ENCODE measurements at regions of chr4 and their contacts with region 1.

Region 1: DNA sequence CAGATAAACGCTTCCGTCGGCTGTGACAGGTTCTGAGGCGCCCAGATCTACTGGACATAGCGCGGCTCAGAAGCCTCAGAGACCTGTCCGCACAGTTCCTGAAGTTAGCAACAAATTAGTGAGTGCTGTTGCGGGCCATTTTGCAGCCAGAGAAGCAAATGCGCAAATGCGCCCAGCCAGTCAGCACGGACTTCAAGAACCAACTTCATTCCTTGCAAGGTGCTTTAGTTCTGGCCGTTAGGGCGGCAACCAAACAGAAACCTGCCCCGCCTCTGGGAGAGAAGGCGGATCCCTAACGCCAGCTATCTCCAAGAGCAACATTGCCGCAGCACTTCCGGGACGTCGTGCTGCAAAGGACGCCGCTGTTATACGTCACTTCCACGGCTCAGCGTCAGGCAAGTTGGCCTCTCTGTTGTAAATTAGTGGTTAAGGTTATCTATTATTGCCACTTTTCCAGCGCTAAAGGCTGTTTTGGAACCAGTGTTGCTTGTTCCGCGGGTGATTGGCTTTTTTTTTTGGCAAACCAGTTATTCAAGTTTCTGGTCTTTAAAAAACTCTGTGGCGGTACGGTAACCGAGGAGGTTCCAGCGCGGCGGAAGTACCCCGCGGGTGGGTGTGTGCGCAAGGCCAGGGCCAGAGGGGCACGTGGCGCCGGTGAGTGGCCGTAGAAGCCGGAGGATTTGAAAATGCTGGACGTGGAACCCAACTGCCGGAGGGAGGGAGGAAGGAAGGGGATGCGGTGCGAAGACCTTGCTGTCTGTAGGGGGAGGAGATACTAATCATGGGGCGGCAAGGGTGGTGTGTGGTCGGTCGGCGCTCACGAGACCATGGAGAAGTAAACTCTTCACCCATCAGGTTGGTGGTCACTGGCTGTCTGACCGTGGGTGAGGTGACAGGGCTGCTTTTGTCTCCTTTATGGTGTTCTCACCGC is at the start of gene GAR1:
- DNase-seq: peak; percentile 62
- H3K4me3 ChIP-seq: peak within 1 kb of the TSS; percentile 76 to 87 (median 78)
- H3K27ac ChIP-seq: peak within 1 kb of the TSS; percentile 72 to 96 (median 90)
- H3K4me1 ChIP-seq: peaks cover 0 to 46% (median 13%) of the 10 kb centered on the region in 3 donors
- H3K27me3 ChIP-seq: no peaks in the 10 kb centered on the region
- CTCF ChIP-seq: peak in 1 of 6 experiments; percentile 12
- POLR2A ChIP-seq: peak in 2 of 4 donors; percentile 40 to 64
- total RNA-seq, gene GAR1: 5.9 to 14.2 (median 11.3) TPM

Region 2: DNA sequence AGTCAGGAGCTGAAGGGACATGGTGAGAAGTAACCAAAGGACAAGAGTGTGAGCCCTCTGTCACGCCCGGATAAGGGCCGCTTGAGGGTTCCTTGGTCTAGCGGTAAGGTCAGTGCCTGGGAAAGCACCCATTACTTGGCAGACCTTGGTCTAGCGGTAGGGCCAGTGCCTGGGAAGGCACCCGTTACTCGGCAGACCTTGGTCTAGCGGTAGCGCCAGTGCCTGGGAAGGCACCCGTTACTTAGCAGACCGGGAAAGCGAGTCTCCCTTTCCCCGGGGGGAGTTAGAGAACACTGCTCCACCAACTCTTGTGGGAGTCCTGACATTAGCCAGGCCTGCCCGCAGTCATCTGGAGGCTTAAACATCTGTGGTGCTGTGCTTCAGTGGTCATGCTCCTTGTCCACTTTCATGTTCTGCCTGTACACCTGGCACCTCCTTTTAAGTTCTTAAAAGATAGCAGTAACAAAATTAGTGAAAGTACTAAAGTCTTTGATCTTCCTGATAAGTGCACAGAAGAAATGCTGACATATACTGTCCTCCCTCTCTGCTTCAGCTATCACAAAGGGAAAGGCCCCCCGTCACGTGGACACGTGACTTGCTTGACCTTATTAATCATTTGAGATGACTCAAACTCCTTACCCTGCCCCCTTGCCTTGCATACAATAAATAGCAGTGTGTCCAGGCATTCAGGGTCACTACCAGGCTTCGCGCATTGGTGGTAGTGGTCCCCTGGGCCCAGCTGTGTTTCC is 391.1 kb before region 1 on chr4:
- intact Hi-C with region 1: loop called (anchors 5 kb)
- DNase-seq: no peak
- H3K4me3 ChIP-seq: no peak overlapping the region
- H3K27ac ChIP-seq: no peak overlapping the region
- H3K4me1 ChIP-seq: peaks cover 0 to 5% (median 2%) of the 10 kb centered on the region in 3 donors
- H3K27me3 ChIP-seq: no peaks in the 10 kb centered on the region
- CTCF ChIP-seq: no peak
- POLR2A ChIP-seq: no peak

Region 3: GRCh38 chr4:109702950-109703663 is 112.3 kb before region 1 on chr4 and contains the start of gene CASP6:
- intact Hi-C with region 1: loop called (anchors 10 kb)
- DNase-seq: peak; percentile 10
- H3K4me3 ChIP-seq: peak within 1 kb of the TSS; percentile 68 to 97 (median 78)
- H3K27ac ChIP-seq: peak within 1 kb of the TSS; percentile 81 to 95 (median 91)
- H3K4me1 ChIP-seq: peaks cover 18 to 33% (median 19%) of the 10 kb centered on the region in 3 donors
- H3K27me3 ChIP-seq: no peaks in the 10 kb centered on the region
- CTCF ChIP-seq: peak; percentile 51 to 86 (median 76)
- POLR2A ChIP-seq: peak in 2 of 4 donors; percentile 12 to 57
- total RNA-seq, gene CASP6: 7.0 to 21.9 (median 15.4) TPM

Region 4: DNA sequence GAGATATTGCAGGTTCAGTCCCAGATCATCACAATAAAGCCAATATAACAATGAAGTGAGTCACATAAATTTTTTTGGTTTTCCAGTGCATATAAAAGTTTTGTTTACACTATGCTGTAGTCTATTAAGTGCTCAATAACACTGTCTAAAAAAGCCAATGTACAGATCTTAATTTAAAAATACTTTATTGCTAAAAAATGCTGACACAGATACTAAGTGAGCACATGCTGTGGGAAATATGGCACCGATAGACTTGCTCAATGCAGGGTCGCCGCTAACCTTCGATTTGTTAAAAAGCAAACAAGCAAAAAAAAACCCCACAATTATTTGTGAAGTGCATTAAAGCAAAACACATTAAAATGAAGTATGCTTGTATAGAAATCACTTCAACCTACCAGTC is 95.8 kb before region 1 on chr4:
- intact Hi-C with region 1: no loop called
- DNase-seq: no peak
- H3K4me3 ChIP-seq: no peak overlapping the region
- H3K27ac ChIP-seq: no peak overlapping the region
- H3K4me1 ChIP-seq: no peaks in the 10 kb centered on the region
- H3K27me3 ChIP-seq: no peaks in the 10 kb centered on the region
- CTCF ChIP-seq: no peak
- POLR2A ChIP-seq: no peak

Region 5: GRCh38 chr4:109729718-109730618 is 85.4 kb before region 1 on chr4 and contains the start of gene PLA2G12A:
- intact Hi-C with region 1: loop called (anchors 5 kb)
- DNase-seq: peak; percentile 15
- H3K4me3 ChIP-seq: peak within 1 kb of the TSS; percentile 78 to 94 (median 83)
- H3K27ac ChIP-seq: peak within 1 kb of the TSS; percentile 88 to 91 (median 89)
- H3K4me1 ChIP-seq: peaks cover 3 to 31% (median 5%) of the 10 kb centered on the region in 3 donors
- H3K27me3 ChIP-seq: no peaks in the 10 kb centered on the region
- CTCF ChIP-seq: no peak
- POLR2A ChIP-seq: peak in 3 of 4 donors; percentile 18 to 85 (median 55)
- total RNA-seq, gene PLA2G12A: 10.8 to 66.6 (median 25.2) TPM

Region 6: GRCh38 chr4:110344162-110344561 is 528.7 kb after region 1 on chr4:
- intact Hi-C with region 1: no loop called
- DNase-seq: no peak
- H3K4me3 ChIP-seq: no peak overlapping the region
- H3K27ac ChIP-seq: no peak overlapping the region
- H3K4me1 ChIP-seq: no peaks in the 10 kb centered on the region
- H3K27me3 ChIP-seq: no peaks in the 10 kb centered on the region
- CTCF ChIP-seq: peak in 1 of 6 experiments; percentile 24
- POLR2A ChIP-seq: no peak